Common myeloid progenitor, CD34-positive (primary cell): ENCODE measurements at regions of chr3 and their contacts with region 1.

Region 1: DNA sequence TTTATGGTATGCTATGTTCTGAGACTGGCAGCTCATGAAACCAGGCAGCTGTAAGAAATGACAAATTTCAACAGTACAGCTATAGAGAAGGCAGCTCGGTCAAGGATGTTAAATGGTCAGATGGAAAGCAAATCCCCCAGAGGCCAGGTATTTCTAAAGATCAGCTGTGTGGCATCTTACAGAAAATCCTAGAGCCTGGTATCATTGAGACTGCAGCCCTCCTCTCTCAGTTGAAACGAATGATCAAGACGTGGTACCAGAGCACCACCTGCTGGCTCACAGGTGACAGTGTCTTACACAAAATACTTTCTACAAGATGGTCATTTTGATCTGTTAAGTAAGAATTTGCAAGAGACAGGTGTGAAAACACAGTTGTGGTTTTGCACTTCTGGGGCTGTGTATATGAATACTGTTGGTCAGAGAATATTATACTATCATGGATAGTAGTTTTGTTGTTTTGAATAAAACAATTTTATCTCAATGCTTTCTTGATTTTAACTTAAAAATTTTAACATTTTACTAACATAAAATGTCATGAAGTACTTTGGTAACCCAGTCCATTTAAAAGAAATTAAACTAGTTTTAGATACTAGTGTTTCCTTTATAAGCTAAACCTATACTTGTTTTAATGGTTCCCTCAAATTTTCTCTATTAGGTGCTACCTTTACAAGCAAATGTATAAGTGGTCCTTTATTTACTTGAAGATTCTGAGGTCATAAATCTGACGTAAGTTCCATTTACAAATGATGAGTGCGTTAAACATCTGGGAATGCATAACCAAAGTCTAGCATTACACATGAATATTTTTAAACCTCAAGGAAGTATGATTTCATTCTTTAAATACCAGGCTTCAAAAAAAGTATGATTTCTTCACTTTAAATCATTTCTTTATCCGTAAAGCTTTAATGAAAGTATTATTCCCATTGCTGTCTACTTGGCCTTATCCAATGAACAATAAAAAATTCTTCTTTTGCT is 121.8 kb downstream of the PDZRN3 start:
- DNase-seq: peak; percentile 70 to 88 (median 82)
- H3K4me3 ChIP-seq: no peak overlapping the region
- H3K27ac ChIP-seq: no peak overlapping the region
- H3K4me1 ChIP-seq: no peaks in the 10 kb centered on the region
- H3K27me3 ChIP-seq: peaks cover 0 to 24% (median 7%) of the 10 kb centered on the region in 5 experiments

Region 2: GRCh38 chr3:73451306-73451944 is 51.5 kb before region 1 on chr3:
- CTCF ChIA-PET with region 1: interaction called, 38 read pairs
- POLR2A ChIA-PET with region 1: no interaction called
- DNase-seq: peak in 2 of 3 donors; percentile 19 to 41
- H3K4me3 ChIP-seq: no peak overlapping the region
- H3K27ac ChIP-seq: no peak overlapping the region
- H3K4me1 ChIP-seq: no peaks in the 10 kb centered on the region
- H3K27me3 ChIP-seq: peaks cover 0 to 16% (median 8%) of the 10 kb centered on the region in 5 experiments

Region 3: GRCh38 chr3:73582535-73582934 is 79.6 kb after region 1 on chr3:
- CTCF ChIA-PET with region 1: no interaction called
- POLR2A ChIA-PET with region 1: no interaction called
- DNase-seq: no peak
- H3K4me3 ChIP-seq: no peak overlapping the region
- H3K27ac ChIP-seq: no peak overlapping the region
- H3K4me1 ChIP-seq: no peaks in the 10 kb centered on the region
- H3K27me3 ChIP-seq: peaks cover 0 to 2% (median 0%) of the 10 kb centered on the region in 5 experiments

Region 4: DNA sequence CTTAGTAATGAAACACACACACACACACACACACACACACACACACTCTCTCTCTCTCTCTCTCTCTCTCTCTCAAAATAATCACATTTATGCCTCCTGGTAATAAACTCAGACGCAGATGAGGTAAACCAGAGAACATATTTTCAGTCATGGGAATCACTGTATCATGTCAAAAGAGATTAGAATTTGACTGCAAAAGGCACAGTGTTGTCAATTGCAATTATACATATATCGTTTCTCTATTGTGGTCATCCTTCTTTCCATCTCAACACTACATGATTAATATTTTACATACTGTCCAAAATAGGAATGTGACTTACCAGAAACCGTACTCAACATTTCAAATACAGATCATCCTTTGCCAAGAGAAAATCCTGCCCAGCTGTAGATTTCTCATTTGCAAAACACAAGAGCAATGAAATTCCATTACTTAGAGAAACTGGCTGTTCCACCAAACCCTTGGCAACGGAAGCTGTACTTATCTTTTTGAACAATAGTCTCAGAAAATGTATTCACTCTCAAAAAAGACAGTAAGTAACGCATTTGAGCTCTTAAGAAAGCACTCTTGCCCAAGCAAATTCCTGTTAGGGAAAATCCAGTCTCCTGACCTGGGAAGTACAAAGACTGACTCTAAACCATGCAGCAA is 97.5 kb after region 1 on chr3:
- CTCF ChIA-PET with region 1: no interaction called
- POLR2A ChIA-PET with region 1: no interaction called
- DNase-seq: no peak
- H3K4me3 ChIP-seq: no peak overlapping the region
- H3K27ac ChIP-seq: no peak overlapping the region
- H3K4me1 ChIP-seq: no peaks in the 10 kb centered on the region
- H3K27me3 ChIP-seq: no peaks in the 10 kb centered on the region